IMR-90 (cell line): ENCODE measurements at regions of chr5 and their contacts with region 1.

Region 1: DNA sequence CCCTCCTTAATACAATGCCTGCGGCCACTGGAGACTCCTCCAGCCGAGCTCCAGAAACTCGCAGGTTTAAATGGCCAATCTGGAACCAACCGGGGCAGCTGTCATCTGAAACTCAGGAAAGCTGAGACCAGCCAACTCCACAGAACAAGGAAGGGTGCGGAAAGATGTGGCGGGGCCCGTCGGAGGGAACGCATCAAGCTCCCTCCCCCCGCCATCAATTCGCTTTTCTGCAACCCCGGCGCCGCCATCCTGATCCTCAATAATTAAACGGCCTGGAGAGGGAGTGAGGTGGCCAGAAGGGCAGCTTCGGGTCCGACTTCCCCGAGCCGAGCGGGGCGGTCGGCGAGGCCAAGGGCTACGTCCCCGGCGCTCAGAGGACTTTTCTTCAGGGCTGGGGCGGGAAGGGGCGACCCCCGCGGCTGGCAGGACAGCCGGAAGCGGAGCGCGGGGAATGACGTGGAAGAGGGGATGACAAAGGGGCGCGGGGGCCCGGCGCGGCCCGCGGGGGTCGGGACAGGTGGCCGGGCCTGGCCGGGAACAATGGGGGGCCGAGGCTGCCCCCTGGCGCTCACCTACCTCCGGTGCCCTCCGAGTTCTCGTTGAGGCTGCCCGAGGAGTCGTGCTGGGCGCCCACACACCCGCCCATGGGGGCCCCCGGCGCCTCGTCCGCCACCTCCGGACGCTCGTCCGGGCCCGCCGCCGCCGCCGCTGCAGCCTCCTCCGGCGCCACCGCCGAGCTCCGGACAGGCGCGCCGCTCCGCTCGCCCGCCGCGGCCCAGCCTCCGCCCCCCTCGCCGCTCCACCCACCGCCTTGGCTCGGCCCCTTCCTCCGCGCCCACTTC is at the start of gene UBTD2:
- DNase-seq: peak; percentile 70
- ATAC-seq: peak; percentile 86
- H3K4me3 ChIP-seq: peak within 1 kb of the TSS; percentile 94
- H3K27ac ChIP-seq: peak within 1 kb of the TSS; percentile 99
- H3K4me1 ChIP-seq: peaks cover 3% of the 10 kb centered on the region
- H3K27me3 ChIP-seq: no peaks in the 10 kb centered on the region
- CTCF ChIP-seq: peak; percentile 45
- POLR2A ChIP-seq: 0 out of 2 replicates have a peak, but pooled peaks have one; percentile 9
- RAD21 ChIP-seq: peak; percentile 38
- total RNA-seq, gene UBTD2: 20.6 and 25.6 TPM in 2 replicates

Region 2: DNA sequence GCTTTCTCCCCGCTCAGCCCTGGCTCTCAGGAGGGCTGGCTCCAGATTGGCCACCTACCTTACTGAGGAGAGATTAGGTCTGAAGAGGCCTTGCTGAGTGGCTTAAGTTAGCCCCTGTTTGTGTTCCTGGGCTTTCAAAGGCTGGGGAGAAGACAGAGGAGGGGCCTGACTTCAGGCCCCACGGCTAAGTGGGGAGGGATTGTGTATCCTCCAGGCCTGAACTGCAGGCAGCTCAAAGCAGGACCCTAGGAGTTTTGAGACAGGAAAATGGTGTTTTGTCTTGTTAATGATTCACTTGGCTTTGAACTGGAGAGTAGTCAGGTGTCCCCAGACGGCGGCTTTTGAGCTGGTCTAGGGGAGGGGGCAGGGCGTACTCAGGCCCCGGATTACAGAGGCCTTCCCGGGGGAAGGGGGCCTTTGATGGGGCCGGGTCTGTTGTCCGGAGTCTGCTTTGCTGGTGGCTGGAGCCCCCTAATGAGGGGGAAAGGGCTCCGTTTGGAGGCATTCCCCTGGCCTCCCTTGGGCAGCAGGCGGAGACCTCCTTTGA is 659.6 kb before region 1 on chr5:
- CTCF ChIA-PET with region 1: no interaction called
- POLR2A ChIA-PET with region 1: no interaction called
- dilution Hi-C with region 1: no loop called
- in situ Hi-C with region 1: no loop called
- intact Hi-C with region 1: loop called (anchors 5 kb)
- DNase-seq: no peak
- ATAC-seq: no peak
- H3K4me3 ChIP-seq: no peak overlapping the region
- H3K27ac ChIP-seq: no peak overlapping the region
- H3K4me1 ChIP-seq: no peaks in the 10 kb centered on the region
- H3K27me3 ChIP-seq: peaks cover 49% of the 10 kb centered on the region
- CTCF ChIP-seq: no peak
- POLR2A ChIP-seq: no peak
- RAD21 ChIP-seq: no peak

Region 3: DNA sequence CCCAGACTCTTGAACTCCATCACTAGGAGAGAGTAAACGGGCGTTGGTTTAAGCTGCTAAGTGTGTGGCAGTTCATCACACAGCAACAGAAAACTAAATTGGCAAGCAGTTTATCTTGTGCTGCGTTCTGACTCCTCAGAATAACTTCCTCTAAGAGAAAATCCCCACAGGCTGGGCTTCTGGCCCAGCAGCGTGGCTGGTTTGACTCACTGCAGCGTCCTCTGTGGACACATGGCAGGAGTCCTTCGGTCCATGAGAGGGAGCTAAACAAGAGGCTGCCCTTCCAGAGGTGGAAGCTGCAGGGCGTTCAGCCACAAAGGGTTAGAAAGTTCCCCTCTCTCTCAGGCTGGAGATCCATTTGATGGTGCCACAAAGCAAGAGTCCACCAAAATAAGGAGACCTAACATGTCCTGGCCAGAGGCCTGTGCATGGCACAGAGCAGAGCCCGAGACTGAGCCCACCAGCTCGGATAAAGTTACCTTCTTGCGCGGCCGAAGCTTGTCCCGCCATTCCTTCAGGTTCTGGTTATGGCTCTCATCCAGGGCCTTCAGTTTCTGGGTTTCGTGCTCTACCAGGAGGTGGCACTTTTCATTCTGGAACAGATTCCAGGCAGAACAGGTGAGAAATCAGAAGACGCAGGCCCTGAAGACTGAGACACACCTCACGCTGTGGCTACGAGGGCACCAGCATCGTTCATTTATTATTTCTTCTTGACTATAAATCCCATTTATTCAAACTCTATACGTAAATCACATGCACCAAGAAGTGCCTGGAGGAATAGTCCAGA is 230.6 kb before region 1 on chr5:
- CTCF ChIA-PET with region 1: no interaction called
- POLR2A ChIA-PET with region 1: no interaction called
- dilution Hi-C with region 1: no loop called
- in situ Hi-C with region 1: no loop called
- intact Hi-C with region 1: loop called (anchors 5 kb)
- DNase-seq: peak; percentile 86
- ATAC-seq: peak; percentile 93
- H3K4me3 ChIP-seq: no peak overlapping the region
- H3K27ac ChIP-seq: no peak overlapping the region
- H3K4me1 ChIP-seq: no peaks in the 10 kb centered on the region
- H3K27me3 ChIP-seq: no peaks in the 10 kb centered on the region
- CTCF ChIP-seq: peak; percentile 55
- POLR2A ChIP-seq: no peak
- RAD21 ChIP-seq: peak; percentile 45

Region 4: DNA sequence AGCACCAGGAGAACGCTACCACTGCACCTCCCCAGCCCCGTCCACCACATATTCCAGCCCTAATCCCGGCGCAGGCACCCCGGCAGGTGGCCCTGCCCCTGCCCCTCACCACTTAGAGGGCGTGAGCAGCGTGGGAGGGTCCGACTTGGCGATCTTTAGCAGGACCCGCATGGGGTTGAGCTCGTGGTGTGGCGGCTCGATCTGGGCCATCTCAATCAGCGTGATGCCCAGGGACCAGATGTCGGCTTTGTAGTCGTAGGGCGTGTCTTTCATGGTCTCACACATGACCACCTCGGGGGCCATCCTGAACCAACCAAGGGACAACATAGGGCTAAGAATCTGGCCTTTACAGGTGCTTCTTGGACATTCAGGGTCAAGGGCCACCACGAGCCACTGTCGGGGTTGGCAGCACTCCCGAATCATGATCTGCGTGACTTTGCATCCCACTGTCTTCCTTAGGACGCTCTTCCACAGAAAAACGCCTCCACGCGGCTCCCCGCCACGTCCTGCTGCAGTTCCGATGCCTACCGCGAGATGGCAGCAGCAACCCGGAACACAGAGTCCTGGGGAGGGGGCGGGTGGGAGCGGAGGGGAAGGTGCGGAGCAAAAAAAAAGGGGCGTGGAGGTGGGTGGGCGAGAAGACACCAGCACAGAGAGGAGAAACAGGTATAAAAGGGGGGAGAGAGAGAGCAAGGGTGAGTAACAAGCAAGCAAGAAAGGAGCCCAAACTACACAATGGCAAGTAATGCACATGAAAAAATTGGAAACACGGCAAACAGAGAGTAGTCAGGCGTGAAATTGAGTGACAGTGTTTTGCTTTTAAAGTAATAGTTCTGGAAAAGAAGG is 176.5 kb before region 1 on chr5:
- CTCF ChIA-PET with region 1: no interaction called
- POLR2A ChIA-PET with region 1: no interaction called
- dilution Hi-C with region 1: no loop called
- in situ Hi-C with region 1: loop called (anchors 10 kb)
- intact Hi-C with region 1: loop called (anchors 2 kb)
- DNase-seq: no peak
- ATAC-seq: peak; percentile 31
- H3K4me3 ChIP-seq: 0 out of 2 replicates have a peak overlapping the region, but pooled peaks have one; percentile 14
- H3K27ac ChIP-seq: peak overlapping the region; percentile 71; the same call in 1 of the 2 replicates
- H3K4me1 ChIP-seq: peaks cover 38% of the 10 kb centered on the region
- H3K27me3 ChIP-seq: no peaks in the 10 kb centered on the region
- CTCF ChIP-seq: peak; percentile 77
- POLR2A ChIP-seq: no peak
- RAD21 ChIP-seq: peak; percentile 72

Region 5: GRCh38 chr5:172188033-172188892 is 95.0 kb before region 1 on chr5 and contains the start of gene STK10:
- CTCF ChIA-PET with region 1: interaction called, 5 read pairs
- POLR2A ChIA-PET with region 1: no interaction called
- dilution Hi-C with region 1: no loop called
- in situ Hi-C with region 1: no loop called
- intact Hi-C with region 1: loop called (anchors 2 kb)
- DNase-seq: peak; percentile 87
- ATAC-seq: peak; percentile 90
- H3K4me3 ChIP-seq: peak within 1 kb of the TSS; percentile 98
- H3K27ac ChIP-seq: peak within 1 kb of the TSS; percentile 88
- H3K4me1 ChIP-seq: peaks cover 11% of the 10 kb centered on the region
- H3K27me3 ChIP-seq: no peaks in the 10 kb centered on the region
- CTCF ChIP-seq: peak; percentile 92
- POLR2A ChIP-seq: 0 out of 2 replicates have a peak, but pooled peaks have one; percentile 17
- RAD21 ChIP-seq: peak; percentile 96
- total RNA-seq, gene STK10: 15.4 and 16.4 TPM in 2 replicates

Region 6: GRCh38 chr5:172207511-172207910 is 75.7 kb before region 1 on chr5:
- CTCF ChIA-PET with region 1: no interaction called
- POLR2A ChIA-PET with region 1: interaction called, 4 read pairs
- dilution Hi-C with region 1: no loop called
- in situ Hi-C with region 1: no loop called
- intact Hi-C with region 1: loop called (anchors 5 kb)
- DNase-seq: no peak
- ATAC-seq: no peak
- H3K4me3 ChIP-seq: no peak overlapping the region
- H3K27ac ChIP-seq: no peak overlapping the region
- H3K4me1 ChIP-seq: no peaks in the 10 kb centered on the region
- H3K27me3 ChIP-seq: no peaks in the 10 kb centered on the region
- CTCF ChIP-seq: no peak
- POLR2A ChIP-seq: no peak
- RAD21 ChIP-seq: no peak

Region 7: GRCh38 chr5:172509405-172509781 is 226.2 kb after region 1 on chr5:
- CTCF ChIA-PET with region 1: no interaction called
- POLR2A ChIA-PET with region 1: no interaction called
- dilution Hi-C with region 1: no loop called
- in situ Hi-C with region 1: no loop called
- intact Hi-C with region 1: no loop called
- DNase-seq: no peak
- ATAC-seq: no peak
- H3K4me3 ChIP-seq: no peak overlapping the region
- H3K27ac ChIP-seq: no peak overlapping the region
- H3K4me1 ChIP-seq: no peaks in the 10 kb centered on the region
- H3K27me3 ChIP-seq: peaks cover 41% of the 10 kb centered on the region
- CTCF ChIP-seq: no peak
- POLR2A ChIP-seq: no peak
- RAD21 ChIP-seq: no peak